ENCODE measurements at regions of chr5 and their contacts with region 1.

Region 1: DNA sequence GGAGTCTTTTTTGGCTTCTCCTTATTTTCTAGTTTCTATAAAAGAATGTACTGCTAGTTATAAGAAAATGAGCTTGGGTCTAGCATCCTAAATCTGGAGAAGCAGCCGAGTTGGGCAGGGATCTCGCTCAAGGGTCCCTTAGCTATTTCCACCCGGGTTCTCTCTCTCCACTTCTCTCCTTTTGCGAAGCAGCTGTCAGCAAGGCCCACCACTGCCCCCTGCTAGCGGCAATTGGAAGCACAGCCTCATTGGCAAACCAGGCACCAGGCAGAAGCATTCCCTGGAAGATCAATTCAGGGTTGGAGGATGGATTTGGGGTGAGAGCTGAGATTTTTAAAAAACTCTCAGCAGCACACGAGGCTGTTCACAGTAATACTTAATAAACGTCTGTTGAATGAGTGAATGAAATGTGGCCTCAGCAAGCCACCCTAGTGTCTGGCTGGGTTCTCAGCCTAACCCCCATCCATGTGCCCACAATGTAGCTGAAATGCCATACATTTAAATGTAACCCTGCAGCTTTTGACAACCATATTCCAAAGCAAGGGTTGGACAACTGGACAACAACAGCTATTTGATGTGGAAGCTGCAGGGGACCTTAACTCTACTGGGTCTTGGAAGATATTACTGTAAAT is 34.6 kb upstream of the TNIP1 start:
- DNase-seq: peak; percentile 70
- ATAC-seq: peak; percentile 80
- H3K4me3 Mint-ChIP-seq: no peak overlapping the region
- H3K27ac Mint-ChIP-seq: peak overlapping the region; percentile 12
- H3K4me1 Mint-ChIP-seq: peaks cover 26% of the 10 kb centered on the region
- H3K27me3 Mint-ChIP-seq: no peaks in the 10 kb centered on the region
- CTCF ChIP-seq: peak; percentile 78

Region 2: DNA sequence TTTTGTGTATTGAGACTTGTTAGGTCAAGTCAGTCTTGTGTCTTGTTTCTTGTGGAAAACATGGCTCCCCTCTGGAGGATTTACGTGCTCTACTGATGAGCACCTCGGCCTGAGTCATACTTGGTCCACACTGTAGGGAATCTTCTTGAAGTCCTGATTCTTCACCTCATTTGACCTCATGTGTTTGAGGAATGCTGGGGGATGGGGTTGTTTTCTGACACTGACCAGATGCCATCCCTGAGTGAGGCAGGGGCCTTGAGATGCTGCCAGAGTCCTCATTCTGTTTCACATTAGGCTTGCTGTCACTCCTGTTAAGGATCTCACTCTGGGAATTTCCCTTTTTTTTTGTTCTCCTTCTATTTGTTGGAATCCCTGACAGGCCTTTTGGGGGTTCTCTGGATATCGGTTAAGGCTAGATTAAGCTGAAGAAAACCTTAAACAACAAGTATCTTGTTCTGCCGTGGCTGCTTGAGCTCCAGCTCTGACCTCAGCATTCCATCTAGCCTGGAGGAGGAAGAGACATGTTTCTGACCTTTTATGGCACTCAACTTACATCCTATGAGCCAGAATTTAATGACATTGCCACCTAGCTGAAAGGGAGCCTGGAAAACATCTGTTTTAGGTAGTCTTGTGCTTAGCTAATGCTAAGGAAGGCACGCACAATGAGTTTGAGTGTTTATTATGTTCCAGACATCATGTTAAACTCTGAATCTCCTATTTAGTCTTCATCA is 737.3 kb before region 1 on chr5:
- CTCF ChIA-PET with region 1: no interaction called
- POLR2A ChIA-PET with region 1: no interaction called
- intact Hi-C with region 1: no loop called
- DNase-seq: no peak
- ATAC-seq: no peak
- H3K4me3 Mint-ChIP-seq: no peak overlapping the region
- H3K27ac Mint-ChIP-seq: no peak overlapping the region
- H3K4me1 Mint-ChIP-seq: no peaks in the 10 kb centered on the region
- H3K27me3 Mint-ChIP-seq: no peaks in the 10 kb centered on the region
- CTCF ChIP-seq: no peak

Region 3: GRCh38 chr5:150895431-150896428 is 219.7 kb before region 1 on chr5:
- CTCF ChIA-PET with region 1: no interaction called
- POLR2A ChIA-PET with region 1: no interaction called
- intact Hi-C with region 1: no loop called
- DNase-seq: no peak
- ATAC-seq: no peak
- H3K4me3 Mint-ChIP-seq: no peak overlapping the region
- H3K27ac Mint-ChIP-seq: no peak overlapping the region
- H3K4me1 Mint-ChIP-seq: no peaks in the 10 kb centered on the region
- H3K27me3 Mint-ChIP-seq: no peaks in the 10 kb centered on the region
- CTCF ChIP-seq: no peak

Region 4: DNA sequence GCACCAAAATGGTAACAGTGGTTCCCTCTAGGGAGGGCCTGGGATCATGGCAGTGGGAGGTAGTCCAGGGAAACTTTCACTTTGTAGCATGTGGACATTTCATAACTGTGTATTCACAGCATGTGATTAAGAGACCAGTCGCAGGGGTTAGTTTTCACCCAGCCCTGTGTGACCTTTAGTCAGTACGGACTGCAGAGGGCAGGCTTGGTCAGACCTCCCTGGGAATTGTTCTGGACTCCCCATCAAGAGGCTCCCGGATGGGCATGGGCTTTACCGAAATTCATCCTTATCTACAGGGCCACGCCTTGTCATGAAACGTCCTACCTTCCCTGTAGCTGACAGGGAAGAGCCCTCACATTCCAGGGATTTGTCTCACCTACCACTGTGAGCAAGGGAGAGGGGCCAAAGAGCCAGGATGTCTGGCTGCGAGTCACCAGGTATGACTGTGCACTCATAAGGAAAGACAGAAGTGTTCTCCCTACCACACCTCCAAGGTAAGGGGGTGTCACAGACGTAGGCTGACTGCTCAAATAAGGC is 75.1 kb before region 1 on chr5:
- CTCF ChIA-PET with region 1: interaction called, 11 read pairs
- POLR2A ChIA-PET with region 1: interaction called, 3 read pairs
- intact Hi-C with region 1: no loop called
- DNase-seq: no peak
- ATAC-seq: no peak
- H3K4me3 Mint-ChIP-seq: no peak overlapping the region
- H3K27ac Mint-ChIP-seq: no peak overlapping the region
- H3K4me1 Mint-ChIP-seq: no peaks in the 10 kb centered on the region
- H3K27me3 Mint-ChIP-seq: no peaks in the 10 kb centered on the region
- CTCF ChIP-seq: no peak

Region 5: GRCh38 chr5:151080623-151081430 is 34.6 kb before region 1 on chr5 and contains the start of gene TNIP1:
- CTCF ChIA-PET with region 1: interaction called, 30 read pairs
- POLR2A ChIA-PET with region 1: interaction called, 27 read pairs
- intact Hi-C with region 1: no loop called
- DNase-seq: peak; percentile 99
- ATAC-seq: peak; percentile 81
- H3K4me3 Mint-ChIP-seq: peak within 1 kb of the TSS; percentile 93
- H3K27ac Mint-ChIP-seq: peak within 1 kb of the TSS; percentile 94
- H3K4me1 Mint-ChIP-seq: peaks cover 88% of the 10 kb centered on the region
- H3K27me3 Mint-ChIP-seq: no peaks in the 10 kb centered on the region
- CTCF ChIP-seq: no peak
- total RNA-seq, gene TNIP1: 506 and 512 TPM in 2 replicates

Region 6: DNA sequence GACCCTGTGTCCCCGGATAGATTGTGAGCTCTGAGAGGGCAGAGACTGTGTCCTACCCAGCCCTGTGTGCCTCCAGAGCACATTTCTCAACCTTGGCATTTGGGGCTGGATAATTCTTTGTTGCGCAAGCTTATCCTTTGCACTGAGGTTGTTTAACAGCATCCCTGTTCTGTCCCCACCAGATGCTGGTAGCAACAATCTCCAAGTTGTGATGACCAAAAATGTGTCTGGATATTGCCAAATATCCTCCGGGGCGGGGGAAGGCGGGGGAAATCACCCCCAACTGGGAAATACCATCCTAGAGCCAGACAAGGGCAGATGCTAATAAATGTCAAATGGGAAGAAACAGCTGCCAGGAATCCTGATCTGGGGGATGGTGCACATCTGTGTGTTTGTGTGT is 10.6 kb before region 1 on chr5:
- CTCF ChIA-PET with region 1: interaction called, 22 read pairs
- POLR2A ChIA-PET with region 1: interaction called, 8 read pairs
- intact Hi-C with region 1: no loop called
- DNase-seq: no peak
- ATAC-seq: no peak
- H3K4me3 Mint-ChIP-seq: no peak overlapping the region
- H3K27ac Mint-ChIP-seq: peak overlapping the region; percentile 55
- H3K4me1 Mint-ChIP-seq: peaks cover 15% of the 10 kb centered on the region
- H3K27me3 Mint-ChIP-seq: no peaks in the 10 kb centered on the region
- CTCF ChIP-seq: no peak

Region 7: GRCh38 chr5:151157426-151158286 is 42.3 kb after region 1 on chr5 and contains the start of gene ANXA6:
- CTCF ChIA-PET with region 1: interaction called, 309 read pairs
- POLR2A ChIA-PET with region 1: interaction called, 5 read pairs
- intact Hi-C with region 1: no loop called
- DNase-seq: peak; percentile 62
- ATAC-seq: peak; percentile 72
- H3K4me3 Mint-ChIP-seq: peak within 1 kb of the TSS; percentile 91
- H3K27ac Mint-ChIP-seq: peak within 1 kb of the TSS; percentile 94
- H3K4me1 Mint-ChIP-seq: peaks cover 77% of the 10 kb centered on the region
- H3K27me3 Mint-ChIP-seq: no peaks in the 10 kb centered on the region
- CTCF ChIP-seq: no peak
- total RNA-seq, gene ANXA6: 367 and 379 TPM in 2 replicates

Region 8: DNA sequence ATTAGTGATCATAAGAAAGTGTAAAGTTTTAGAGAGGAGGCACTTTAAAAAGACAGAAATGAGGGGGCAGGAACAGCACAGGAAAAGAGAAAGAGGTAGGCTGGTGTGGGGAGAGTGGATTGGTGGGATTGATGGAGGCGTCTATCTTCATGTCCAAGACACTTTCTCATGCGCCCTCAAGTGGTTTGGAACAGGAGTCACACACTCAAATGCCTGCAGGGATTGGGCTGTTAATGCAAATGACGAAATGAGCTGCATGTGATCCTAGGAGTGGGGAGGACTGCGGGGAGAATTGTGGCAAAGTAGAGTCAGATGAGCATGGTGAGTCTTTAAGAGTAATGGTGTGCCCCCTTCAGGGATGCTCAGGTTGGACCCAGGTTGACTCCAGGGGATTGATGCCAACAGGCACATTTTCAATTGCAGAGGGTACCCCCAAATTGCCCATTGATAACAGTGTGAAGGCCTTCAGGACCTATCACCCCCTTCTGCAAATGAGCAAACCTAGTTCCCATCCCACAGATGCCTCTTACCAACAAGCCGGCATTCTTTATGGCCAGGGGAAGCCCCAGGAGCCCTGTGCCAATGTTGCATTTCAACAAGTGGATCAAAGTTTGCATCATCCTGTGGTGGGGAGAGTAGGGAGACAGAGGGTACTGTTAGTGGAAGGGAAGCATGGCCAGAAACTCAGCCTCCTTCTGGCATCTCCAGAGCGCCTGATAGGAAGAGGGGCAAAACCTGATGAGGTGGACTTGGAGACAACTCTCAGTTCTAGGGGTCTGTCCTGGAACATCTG is 182.9 kb after region 1 on chr5:
- CTCF ChIA-PET with region 1: interaction called, 3 read pairs
- POLR2A ChIA-PET with region 1: no interaction called
- intact Hi-C with region 1: loop called (anchors 1 kb)
- DNase-seq: no peak
- ATAC-seq: peak; percentile 58
- H3K4me3 Mint-ChIP-seq: no peak overlapping the region
- H3K27ac Mint-ChIP-seq: no peak overlapping the region
- H3K4me1 Mint-ChIP-seq: peaks cover 4% of the 10 kb centered on the region
- H3K27me3 Mint-ChIP-seq: peaks cover 15% of the 10 kb centered on the region
- CTCF ChIP-seq: no peak

Region 9: DNA sequence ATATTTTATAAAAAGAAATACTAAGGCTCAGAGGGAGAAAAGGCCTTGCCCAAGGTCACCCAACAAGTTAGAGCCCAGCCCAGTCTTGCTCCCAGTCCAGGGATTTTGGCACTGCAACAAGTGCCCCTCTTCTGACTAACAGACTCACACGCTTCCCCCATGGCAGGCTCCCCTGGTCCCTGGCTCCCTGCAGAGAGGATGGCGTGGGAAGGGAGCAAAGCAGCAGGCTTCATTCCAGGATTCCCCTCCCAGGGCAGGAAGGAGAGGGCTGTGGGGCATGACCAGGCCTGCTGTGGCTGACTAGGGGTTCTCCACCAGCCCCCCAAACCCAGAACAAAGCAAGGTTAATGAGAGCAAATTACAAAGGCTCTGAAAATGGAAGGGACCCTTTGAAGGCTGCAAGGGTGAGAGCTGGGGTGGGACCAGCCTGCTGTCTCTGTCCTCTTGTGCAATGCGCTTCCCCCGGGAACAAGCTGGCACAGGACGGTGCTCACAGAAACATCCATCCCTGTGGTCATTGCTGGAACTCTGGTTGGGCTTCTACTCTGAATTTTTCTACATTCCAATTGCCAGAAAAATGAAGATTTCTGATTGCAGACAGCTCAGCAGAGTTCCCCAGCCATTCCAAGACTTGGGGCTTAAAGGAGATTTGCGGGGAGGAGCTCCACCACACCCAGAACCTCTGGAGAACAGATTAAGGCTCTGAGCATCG is 512.9 kb after region 1 on chr5:
- CTCF ChIA-PET with region 1: no interaction called
- POLR2A ChIA-PET with region 1: no interaction called
- intact Hi-C with region 1: no loop called
- DNase-seq: no peak
- ATAC-seq: no peak
- H3K4me3 Mint-ChIP-seq: no peak overlapping the region
- H3K27ac Mint-ChIP-seq: no peak overlapping the region
- H3K4me1 Mint-ChIP-seq: no peaks in the 10 kb centered on the region
- H3K27me3 Mint-ChIP-seq: peaks cover 9% of the 10 kb centered on the region
- CTCF ChIP-seq: no peak

Measured in activated B cell treated with CpG ODN at 0.5 μM for 24 hours (primary cell).